Activated T-helper 1 cell treated with anti-CD3 and anti-CD28 coated beads, Interleukin-12 subunit alpha, Interleukin-12 subunit beta, Interleukin-2, Interleukin-4 antibody, amounts not matched to agents 30 ng/mL and 10 ng/mL and 1 ng/mL, durations not matched to agents 14 hours and 24 hours and 36 hours (primary cell): ENCODE measurements at regions of chr7 and their contacts with region 1.

Region 1: GRCh38 chr7:99408379-99409191 is at the starts of genes BUD31 and PDAP1:
- DNase-seq: peak; percentile 92
- H3K4me3 Mint-ChIP-seq: peak within 1 kb of the TSS; percentile 98
- H3K27ac Mint-ChIP-seq: peak within 1 kb of the TSS; percentile 98
- H3K4me1 Mint-ChIP-seq: peaks cover 43% of the 10 kb centered on the region
- H3K27me3 Mint-ChIP-seq: no peaks in the 10 kb centered on the region
- total RNA-seq, gene BUD31: 132 and 145 TPM in 2 replicates
- total RNA-seq, gene PDAP1: 160 and 162 TPM in 2 replicates

Region 2: DNA sequence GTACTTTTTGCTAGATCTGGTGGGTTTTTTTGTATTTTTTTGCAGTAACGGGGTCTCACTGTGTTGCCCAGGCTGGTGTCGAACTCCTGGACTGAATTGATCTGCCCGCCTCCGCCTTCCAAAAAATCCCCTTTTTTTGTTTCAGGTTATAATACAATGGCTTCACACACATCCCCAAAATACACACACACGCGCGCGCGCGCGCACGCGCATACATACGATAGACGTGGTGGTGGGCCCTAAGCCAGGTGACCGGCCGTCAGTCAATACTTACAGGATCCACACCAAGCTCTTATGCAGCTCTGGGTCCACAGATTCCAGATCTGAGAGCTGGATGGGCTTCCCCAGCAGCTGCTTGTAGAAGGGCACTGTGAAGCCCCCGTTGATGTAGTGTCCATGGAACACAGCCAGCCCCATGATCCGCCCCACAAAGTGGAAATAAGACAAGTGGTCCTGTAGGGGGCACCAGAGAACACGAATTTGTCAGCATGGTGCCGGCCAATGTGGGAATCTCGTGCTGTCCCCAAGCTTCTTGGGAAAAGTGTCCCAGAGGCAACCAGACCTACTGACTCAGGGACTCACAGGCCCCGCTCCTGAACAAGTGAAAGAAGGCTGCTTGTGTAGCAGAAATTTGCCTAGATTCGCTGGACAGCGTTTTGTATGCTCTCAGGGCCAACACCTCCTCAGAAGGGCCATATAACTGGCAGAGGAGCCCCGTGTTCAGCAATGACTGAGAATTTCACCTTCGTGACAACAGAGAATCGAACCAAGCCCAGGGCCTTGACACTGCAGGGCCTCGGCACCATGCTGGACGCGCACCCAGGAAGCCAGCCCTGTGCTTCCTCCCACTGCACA is 368.3 kb before region 1 on chr7:
- intact Hi-C with region 1: loop called (anchors 1 kb)
- DNase-seq: peak; percentile 38
- H3K4me3 Mint-ChIP-seq: no peak overlapping the region
- H3K27ac Mint-ChIP-seq: peak overlapping the region; percentile 58
- H3K4me1 Mint-ChIP-seq: peaks cover 4% of the 10 kb centered on the region
- H3K27me3 Mint-ChIP-seq: no peaks in the 10 kb centered on the region

Region 3: DNA sequence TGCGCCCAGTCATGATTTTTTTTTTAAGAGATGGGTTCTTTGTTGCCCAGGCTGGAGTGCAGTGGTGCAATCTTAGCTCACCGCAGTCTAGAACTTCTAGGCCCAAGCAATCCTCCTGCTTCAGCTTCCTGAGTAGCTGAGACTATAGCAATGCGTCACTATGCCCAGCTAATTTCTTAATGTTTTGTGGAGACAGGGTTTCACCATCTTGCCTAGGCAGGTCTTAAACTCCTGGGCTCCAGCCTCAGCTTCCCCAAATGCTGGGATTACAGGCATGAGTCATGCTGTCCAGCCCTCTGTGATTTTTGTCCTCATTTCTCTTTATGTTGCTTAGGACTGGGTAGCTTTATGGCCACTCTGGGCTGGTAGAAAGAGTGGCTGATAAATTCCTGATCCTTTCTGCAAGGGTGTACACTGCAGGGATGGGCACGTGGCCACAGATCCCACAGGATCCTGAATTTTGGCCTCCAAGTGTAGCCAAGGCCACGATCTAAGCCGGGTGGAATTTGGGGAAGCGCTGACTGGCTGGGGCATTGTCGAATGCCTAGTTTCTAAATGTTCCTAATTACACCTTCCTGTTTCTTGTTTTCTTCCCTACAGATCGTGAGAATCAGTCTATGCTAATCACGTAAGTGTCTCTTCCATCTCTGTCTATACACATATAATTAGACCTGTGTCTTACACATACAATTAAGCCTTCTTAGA is 160.0 kb before region 1 on chr7:
- intact Hi-C with region 1: no loop called
- DNase-seq: no peak
- H3K4me3 Mint-ChIP-seq: no peak overlapping the region
- H3K27ac Mint-ChIP-seq: no peak overlapping the region
- H3K4me1 Mint-ChIP-seq: no peaks in the 10 kb centered on the region
- H3K27me3 Mint-ChIP-seq: no peaks in the 10 kb centered on the region

Region 4: DNA sequence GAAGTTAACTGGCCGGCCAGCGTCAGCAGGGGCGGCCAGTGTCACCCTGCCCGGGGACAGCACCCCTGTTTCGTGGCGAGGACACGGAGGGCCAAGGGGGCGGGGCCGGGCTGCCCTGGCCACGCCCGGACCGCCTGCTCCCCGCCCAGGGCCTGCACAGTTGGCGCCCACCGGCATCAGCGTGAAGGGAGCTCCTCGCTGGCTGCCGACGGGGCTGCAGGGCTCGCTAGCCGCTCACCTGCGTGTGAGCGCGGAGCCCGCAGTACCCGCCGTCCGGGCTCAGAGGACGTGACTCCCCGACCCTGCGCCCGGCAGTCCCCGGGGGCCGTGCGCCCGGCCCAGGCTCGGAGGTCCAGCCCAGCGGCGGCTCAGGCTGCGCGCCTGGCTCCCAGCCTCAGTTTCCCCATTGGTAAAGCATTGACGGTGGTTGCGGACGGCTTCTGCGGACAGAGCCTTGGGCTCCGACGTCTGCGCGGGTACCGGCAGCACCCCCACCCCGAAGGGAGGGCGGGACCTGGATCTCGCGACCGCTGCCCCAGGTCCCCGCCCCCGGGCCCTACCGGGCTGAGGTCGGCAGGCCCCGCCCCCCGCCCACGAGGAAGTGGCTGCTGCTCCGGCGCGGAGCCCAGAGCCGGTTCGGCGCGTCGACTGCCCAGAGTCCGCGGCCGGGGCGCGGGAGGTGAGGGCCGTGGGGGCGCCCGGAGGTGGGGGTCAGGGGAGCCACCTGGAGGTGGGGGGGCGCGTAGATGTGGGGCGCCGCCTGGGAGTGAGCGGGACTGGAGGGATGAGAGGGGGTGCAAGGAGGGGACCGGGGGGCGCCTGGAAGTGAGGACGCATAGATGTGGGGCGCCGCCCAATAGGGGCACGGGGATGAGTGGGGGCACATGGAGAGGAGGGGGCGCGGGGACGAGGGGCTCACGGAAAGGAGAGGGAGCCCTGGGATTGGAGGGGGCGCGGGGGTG is 34.2 kb before region 1 on chr7 and contains the start of gene ARPC1B:
- intact Hi-C with region 1: loop called (anchors 1 kb)
- DNase-seq: peak; percentile 77
- H3K4me3 Mint-ChIP-seq: peak within 1 kb of the TSS; percentile 86
- H3K27ac Mint-ChIP-seq: peak within 1 kb of the TSS; percentile 72
- H3K4me1 Mint-ChIP-seq: peaks cover 15% of the 10 kb centered on the region
- H3K27me3 Mint-ChIP-seq: no peaks in the 10 kb centered on the region
- total RNA-seq, gene ARPC1B: 254 and 256 TPM in 2 replicates

Region 5: GRCh38 chr7:99392677-99393354 is 15.8 kb before region 1 on chr7:
- intact Hi-C with region 1: loop called (anchors 1 kb)
- DNase-seq: peak; percentile 69
- H3K4me3 Mint-ChIP-seq: peak overlapping the region; percentile 63
- H3K27ac Mint-ChIP-seq: peak overlapping the region; percentile 68
- H3K4me1 Mint-ChIP-seq: peaks cover 16% of the 10 kb centered on the region
- H3K27me3 Mint-ChIP-seq: no peaks in the 10 kb centered on the region

Region 6: DNA sequence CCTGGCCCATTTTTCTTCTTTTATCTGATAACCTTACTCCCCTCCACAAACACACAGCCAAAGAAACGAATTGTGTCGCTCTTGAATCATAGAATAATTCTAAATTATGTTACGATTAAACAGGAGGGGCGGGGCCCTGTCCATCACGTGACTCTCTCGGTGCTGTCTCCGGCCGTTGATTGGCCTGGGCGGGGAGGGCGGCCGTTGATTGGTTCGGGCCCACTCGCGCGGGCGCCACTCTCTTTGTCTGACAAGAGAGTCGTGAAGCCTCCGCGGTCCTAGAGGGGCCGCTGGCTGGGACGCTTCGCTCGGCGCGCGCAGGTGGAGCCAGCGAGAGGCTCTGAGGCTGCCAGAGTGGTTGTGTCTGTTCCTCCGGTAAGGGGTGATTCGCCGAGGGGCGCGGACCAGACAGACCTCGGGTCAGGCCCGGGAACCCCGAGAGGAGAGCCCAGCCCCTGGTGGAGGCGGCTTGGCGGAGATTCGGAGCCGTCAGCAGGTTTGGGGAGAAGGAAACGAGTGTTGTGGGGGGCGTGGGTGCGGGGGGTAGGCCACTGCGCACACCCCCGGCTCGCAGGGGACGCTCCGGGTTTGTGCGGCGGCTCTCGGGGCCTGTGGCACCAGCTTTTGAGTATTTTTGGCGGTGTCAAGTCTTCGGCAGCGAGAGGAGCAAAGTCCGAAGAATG is 64.1 kb after region 1 on chr7 and contains the start of gene ZNF789:
- intact Hi-C with region 1: loop called (anchors 1 kb)
- DNase-seq: peak; percentile 96
- H3K4me3 Mint-ChIP-seq: peak within 1 kb of the TSS; percentile 99
- H3K27ac Mint-ChIP-seq: peak within 1 kb of the TSS; percentile 92
- H3K4me1 Mint-ChIP-seq: peaks cover 30% of the 10 kb centered on the region
- H3K27me3 Mint-ChIP-seq: peaks cover 1% of the 10 kb centered on the region
- total RNA-seq, gene ZNF789: 19.6 and 22.4 TPM in 2 replicates

Region 7: GRCh38 chr7:99558306-99559174 is 150.0 kb after region 1 on chr7 and contains the start of gene ZNF655:
- intact Hi-C with region 1: loop called (anchors 1 kb)
- DNase-seq: peak; percentile 89
- H3K4me3 Mint-ChIP-seq: peak within 1 kb of the TSS; percentile 100
- H3K27ac Mint-ChIP-seq: peak within 1 kb of the TSS; percentile 98
- H3K4me1 Mint-ChIP-seq: peaks cover 48% of the 10 kb centered on the region
- H3K27me3 Mint-ChIP-seq: no peaks in the 10 kb centered on the region
- total RNA-seq, gene ZNF655: 77.9 and 79.9 TPM in 2 replicates

Region 8: DNA sequence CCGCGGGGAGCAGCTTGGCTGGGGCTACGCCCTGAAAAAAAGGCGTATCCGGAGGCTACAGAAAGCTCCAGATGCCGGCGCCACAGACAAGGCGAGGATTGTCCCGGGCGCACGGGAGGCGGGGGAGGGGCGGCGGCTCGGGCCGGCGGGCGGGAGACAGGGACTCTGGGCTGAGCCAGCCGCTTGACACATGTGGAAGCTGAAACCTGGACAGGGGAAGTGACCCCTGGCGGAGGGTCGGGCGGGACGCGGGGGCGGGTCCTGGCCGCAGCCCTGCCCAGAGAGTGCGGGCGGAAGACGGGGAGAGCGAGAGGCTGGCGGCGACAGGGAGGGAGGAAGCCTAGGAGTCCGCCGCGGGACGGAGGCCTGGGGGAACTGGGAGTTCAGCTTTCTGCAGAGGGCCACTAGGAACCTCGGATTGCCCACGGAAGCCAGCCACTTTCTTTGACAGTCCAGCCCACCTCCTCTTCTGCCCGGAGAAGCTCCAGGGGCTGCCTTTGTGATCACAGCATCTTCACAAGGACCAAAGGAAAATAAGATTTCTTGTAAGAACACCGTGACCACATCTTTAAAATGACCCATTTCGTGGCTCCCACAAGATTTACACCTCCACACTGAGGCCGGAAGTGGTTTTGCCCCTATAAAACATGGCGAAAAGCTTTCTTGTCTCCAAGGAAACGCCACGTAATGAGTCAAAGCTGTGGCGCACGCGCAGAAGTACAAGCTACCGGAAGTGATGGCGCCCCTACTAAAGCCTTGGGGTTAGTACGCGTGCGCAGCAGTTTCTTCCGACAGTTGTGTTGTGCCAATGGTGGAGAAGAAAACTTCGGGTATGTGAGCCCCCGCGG is 1809.0 kb after region 1 on chr7 and contains the starts of genes PLOD3 and ZNHIT1:
- intact Hi-C with region 1: loop called (anchors 5 kb)
- DNase-seq: peak; percentile 92
- H3K4me3 Mint-ChIP-seq: peak within 1 kb of the TSS; percentile 99
- H3K27ac Mint-ChIP-seq: peak within 1 kb of the TSS; percentile 92
- H3K4me1 Mint-ChIP-seq: peaks cover 35% of the 10 kb centered on the region
- H3K27me3 Mint-ChIP-seq: no peaks in the 10 kb centered on the region
- total RNA-seq, gene PLOD3: 65.2 and 68.9 TPM in 2 replicates
- total RNA-seq, gene ZNHIT1: 49.7 and 53.4 TPM in 2 replicates